Naive thymus-derived CD4-positive, alpha-beta T cell (primary cell): ENCODE measurements at regions of chr1 and their contacts with region 1.

Region 1: DNA sequence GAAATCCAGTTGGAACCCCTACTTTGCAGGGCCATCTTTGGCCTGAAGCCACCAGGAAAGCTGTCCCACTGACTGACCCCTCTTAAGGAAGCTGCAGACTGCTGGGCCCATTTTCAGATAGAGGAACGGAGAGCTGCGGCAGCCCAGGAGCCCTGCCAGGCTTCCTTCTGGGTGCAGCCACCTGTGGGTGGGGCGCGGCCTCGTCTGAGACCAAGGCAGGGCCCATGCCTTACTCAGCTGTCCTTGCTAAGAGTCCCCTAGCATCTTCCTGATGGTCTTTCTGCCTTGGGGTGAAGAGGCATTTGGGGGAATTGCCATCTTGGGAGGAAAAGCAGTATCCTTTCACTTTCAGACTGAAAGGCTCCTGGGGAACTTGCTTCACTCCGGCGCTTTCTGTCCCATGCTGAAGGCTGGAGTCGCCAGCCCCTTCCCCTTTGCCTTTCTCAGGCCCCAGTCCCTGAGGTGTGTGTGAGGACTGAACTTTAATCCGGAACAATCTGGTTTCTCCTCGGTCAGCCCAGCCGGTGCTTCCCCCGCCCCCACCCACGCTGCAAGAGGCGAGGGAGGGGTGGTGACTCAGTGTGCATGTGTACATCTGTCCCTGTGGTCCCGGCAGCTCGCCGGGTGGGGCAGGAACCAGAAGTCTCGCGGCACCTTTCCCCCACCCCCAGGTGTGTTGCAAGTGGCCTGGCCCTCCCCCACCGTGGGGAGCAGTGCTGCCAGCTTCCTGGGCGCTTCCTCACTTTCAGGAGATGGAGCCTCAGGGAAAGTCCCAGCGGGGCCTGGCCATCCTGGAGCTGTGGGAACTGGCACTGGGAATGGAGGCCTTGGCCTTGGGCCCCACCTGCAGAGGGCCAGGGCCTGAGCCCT is 5.1 kb downstream of the ZC3H12A start:
- DNase-seq: peak in 8 of 9 donors; percentile 54 to 90 (median 63)
- ATAC-seq: peak; percentile 69
- H3K4me3 ChIP-seq: peak overlapping the region; percentile 87
- H3K4me3 Mint-ChIP-seq: peak overlapping the region; percentile 91 to 99 (median 96)
- H3K27ac ChIP-seq: peak overlapping the region; percentile 95
- H3K27ac Mint-ChIP-seq: peak overlapping the region; percentile 96 to 99 (median 98)
- H3K4me1 ChIP-seq: peaks cover 26% of the 10 kb centered on the region in 2 donors
- H3K4me1 Mint-ChIP-seq: peaks cover 21 to 50% (median 34%) of the 10 kb centered on the region in 7 donors
- H3K27me3 ChIP-seq: no peaks in the 10 kb centered on the region
- H3K27me3 Mint-ChIP-seq: no peaks in the 10 kb centered on the region

Region 2: DNA sequence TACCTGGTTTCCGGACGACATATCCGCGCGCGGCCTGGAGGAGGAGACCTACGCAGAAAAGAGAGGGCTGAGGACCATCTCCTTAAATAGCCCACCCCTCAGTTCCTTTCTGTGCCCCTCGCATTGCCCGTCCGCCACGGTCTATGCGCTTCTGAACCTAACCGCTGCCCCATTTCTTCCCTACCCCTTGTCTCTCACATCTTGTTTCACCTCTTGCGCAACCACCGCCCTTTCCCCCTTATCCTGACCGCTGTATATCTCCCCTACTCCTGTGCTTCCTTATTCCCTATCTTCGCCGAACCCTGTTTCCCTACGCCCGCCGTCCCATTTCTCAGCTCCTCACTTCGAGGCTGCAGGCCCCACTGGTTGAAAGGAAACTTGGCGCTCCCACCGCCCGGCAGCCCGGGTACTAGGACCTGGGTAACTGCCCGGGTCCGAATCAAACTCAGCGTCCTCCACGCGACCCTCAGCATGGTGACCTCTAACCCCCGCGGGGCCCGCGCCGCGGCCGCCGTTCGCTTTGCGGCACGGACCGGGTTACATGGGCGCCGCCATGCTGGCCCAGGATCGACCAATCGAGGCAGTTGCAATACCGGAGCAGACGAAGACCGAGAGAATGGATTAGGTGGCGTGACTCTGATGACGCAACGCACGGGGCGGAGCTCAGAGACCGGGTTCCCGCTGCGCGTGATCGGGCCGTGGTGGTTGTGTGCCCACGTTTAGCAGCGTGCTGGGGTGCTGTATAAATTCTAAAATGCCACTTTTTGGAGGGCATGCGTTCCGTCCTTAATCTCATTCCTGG is 1015.5 kb before region 1 on chr1 and contains the start of gene MRPS15:
- CTCF ChIA-PET with region 1: no interaction called
- POLR2A ChIA-PET with region 1: no interaction called
- intact Hi-C with region 1: loop called in 1 of 2 experiments (anchors 5 kb)
- DNase-seq: peak; percentile 85 to 95 (median 93)
- ATAC-seq: peak; percentile 99
- H3K4me3 ChIP-seq: peak within 1 kb of the TSS; percentile 85
- H3K4me3 Mint-ChIP-seq: peak within 1 kb of the TSS; percentile 86 to 100 (median 97)
- H3K27ac ChIP-seq: peak within 1 kb of the TSS; percentile 91
- H3K27ac Mint-ChIP-seq: peak within 1 kb of the TSS; percentile 90 to 99 (median 98)
- H3K4me1 ChIP-seq: peaks cover 7 to 13% of the 10 kb centered on the region in 2 donors
- H3K4me1 Mint-ChIP-seq: peaks cover 18 to 54% (median 43%) of the 10 kb centered on the region in 7 donors
- H3K27me3 ChIP-seq: no peaks in the 10 kb centered on the region
- H3K27me3 Mint-ChIP-seq: no peaks in the 10 kb centered on the region
- total RNA-seq, gene MRPS15: 30.2 to 84.0 (median 36.3) TPM

Region 3: DNA sequence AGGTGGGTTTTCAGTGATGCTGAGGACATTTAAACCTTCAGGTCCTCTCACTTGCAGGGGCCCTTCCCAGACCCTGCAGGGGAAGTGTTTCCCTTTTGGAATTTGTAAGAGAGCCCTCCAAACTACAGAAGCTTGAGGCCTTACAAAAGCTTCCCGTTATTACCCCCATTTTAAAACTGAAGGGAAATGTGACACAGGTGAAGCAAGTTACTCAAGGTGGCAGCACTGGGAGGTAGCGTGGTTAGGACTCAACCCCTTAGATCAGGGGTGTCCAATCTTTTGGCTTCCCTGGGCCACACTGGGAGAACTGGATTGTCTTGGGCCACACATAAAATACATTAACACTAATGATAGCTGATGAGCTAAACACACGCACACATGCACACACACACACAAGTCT is 21.0 kb before region 1 on chr1:
- CTCF ChIA-PET with region 1: interaction called, 249 read pairs
- POLR2A ChIA-PET with region 1: interaction called, 24 read pairs
- intact Hi-C with region 1: loop called in 1 of 2 experiments (anchors 1 kb)
- DNase-seq: no peak
- ATAC-seq: no peak
- H3K4me3 ChIP-seq: no peak overlapping the region
- H3K4me3 Mint-ChIP-seq: no peak overlapping the region
- H3K27ac ChIP-seq: no peak overlapping the region
- H3K27ac Mint-ChIP-seq: peak overlapping the region in 3 of 9 donors; percentile 30 to 78 (median 46)
- H3K4me1 ChIP-seq: no peaks in the 10 kb centered on the region
- H3K4me1 Mint-ChIP-seq: peaks cover 4 to 16% (median 11%) of the 10 kb centered on the region in 7 donors
- H3K27me3 ChIP-seq: no peaks in the 10 kb centered on the region
- H3K27me3 Mint-ChIP-seq: no peaks in the 10 kb centered on the region

Region 4: DNA sequence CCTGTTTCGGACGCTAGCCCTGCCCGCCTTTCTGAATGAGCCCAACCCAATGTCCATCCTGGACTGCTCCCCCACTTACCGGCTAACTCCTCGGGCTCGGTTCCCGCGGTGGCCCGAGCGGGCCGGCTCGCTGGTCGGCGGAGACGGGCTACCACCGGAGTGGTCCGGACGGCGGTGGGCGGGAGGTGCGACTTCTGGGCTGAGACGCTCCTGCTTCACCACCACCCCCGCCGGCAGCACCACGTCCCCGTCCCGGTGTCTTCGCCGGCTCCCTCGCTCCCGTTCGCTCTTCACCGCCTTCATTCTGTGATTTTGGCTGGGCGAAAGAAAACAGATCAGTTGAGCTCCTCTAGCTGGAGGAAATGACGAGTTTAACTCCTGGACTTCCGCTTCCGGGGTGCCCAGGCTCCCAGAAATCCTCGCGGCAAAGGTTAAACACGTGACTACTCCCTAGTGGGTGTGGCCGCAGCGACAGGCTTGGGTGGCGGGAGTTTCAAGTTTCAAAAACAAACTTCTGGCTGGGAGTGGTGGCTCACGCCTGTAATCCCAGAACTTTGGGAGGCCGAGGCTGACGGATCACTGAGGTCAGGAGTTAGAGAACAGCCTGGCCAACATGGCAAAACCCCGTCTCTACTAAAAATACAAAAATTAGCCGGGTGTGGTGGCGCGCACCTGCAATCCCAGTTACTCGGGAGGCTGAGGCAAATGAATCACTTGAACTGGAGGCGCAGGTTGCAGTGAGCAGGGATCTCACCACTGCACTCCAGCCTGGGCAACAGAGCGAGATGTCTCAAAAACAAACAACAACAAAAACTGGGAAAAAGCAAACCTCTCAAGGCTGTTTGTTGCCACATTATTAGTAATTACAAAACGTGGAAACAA is 74.7 kb after region 1 on chr1 and contains the start of gene SNIP1:
- CTCF ChIA-PET with region 1: no interaction called
- POLR2A ChIA-PET with region 1: interaction called, 9 read pairs
- intact Hi-C with region 1: loop called (anchors 1 to 2 kb)
- DNase-seq: peak; percentile 67 to 94 (median 92)
- ATAC-seq: peak; percentile 99
- H3K4me3 ChIP-seq: peak within 1 kb of the TSS; percentile 92
- H3K4me3 Mint-ChIP-seq: peak within 1 kb of the TSS; percentile 97 to 100 (median 99)
- H3K27ac ChIP-seq: peak within 1 kb of the TSS; percentile 94
- H3K27ac Mint-ChIP-seq: peak within 1 kb of the TSS; percentile 91 to 99 (median 98)
- H3K4me1 ChIP-seq: peaks cover 10 to 24% of the 10 kb centered on the region in 2 donors
- H3K4me1 Mint-ChIP-seq: peaks cover 23 to 51% (median 45%) of the 10 kb centered on the region in 7 donors
- H3K27me3 ChIP-seq: no peaks in the 10 kb centered on the region
- H3K27me3 Mint-ChIP-seq: peaks cover 0 to 6% (median 0%) of the 10 kb centered on the region in 5 donors
- total RNA-seq, gene SNIP1: 27.8 to 53.6 (median 36.7) TPM

Region 5: DNA sequence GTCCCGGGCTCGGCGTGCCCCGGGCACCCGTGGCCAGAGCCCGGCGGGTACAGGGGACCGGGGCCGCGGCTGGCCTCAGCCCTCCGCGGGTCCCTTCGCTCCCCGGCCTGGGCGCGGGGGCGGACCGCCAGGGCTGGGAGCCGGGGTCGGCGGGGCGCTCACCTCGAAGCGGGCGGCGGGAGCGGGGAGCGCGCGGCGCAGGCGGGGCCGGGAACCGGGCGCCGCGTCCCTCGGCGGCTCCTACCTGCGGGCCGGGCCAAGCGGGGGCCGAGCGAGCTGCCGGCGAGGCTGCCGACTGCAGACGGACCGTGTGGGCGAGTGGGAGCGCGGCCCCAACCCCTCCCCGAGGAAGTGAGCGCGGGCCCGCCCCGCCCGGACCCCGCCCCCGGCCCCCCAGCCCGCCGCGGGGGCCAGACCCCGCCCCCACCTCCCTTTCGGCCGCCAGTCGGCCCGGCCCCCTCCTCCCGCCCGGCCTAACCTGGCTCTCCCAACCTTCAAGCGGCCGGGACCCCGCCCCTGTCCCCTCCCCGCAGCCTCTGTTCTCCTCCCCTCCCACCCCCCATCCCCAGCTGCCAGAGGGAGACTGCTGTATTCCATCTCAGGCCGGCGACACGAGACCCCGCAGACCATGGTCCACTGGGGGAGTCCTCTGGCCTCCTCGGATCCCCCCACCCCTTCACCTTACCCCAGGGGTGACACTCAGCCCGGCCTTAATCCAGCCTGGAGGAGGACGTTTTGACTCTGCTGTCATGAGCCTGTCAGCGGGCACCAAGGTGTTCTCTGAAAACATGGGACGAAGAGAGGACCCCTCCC is 525.9 kb after region 1 on chr1 and contains the start of gene FHL3:
- CTCF ChIA-PET with region 1: no interaction called
- POLR2A ChIA-PET with region 1: no interaction called
- intact Hi-C with region 1: loop called (anchors 5 kb)
- DNase-seq: peak in 4 of 9 donors; percentile 16 to 71 (median 28)
- ATAC-seq: peak; percentile 44
- H3K4me3 ChIP-seq: peak within 1 kb of the TSS; percentile 42
- H3K4me3 Mint-ChIP-seq: peak within 1 kb of the TSS; percentile 67 to 93 (median 83)
- H3K27ac ChIP-seq: peak within 1 kb of the TSS; percentile 51
- H3K27ac Mint-ChIP-seq: peak within 1 kb of the TSS; percentile 57 to 92 (median 73)
- H3K4me1 ChIP-seq: peaks cover 0 to 9% of the 10 kb centered on the region in 2 donors
- H3K4me1 Mint-ChIP-seq: peaks cover 21 to 50% (median 31%) of the 10 kb centered on the region in 7 donors
- H3K27me3 ChIP-seq: no peaks in the 10 kb centered on the region
- H3K27me3 Mint-ChIP-seq: no peaks in the 10 kb centered on the region
- total RNA-seq, gene FHL3: 2.9 to 19.0 (median 8.6) TPM